Activated B cell treated with CpG ODN at 0.5 μM for 24 hours (primary cell): ENCODE measurements at regions of chr16 and their contacts with region 1.

Region 1: GRCh38 chr16:29745853-29746345 is at the start of gene C16orf54:
- DNase-seq: peak; percentile 80
- ATAC-seq: peak; percentile 86
- H3K4me3 Mint-ChIP-seq: peak within 1 kb of the TSS; percentile 94
- H3K27ac Mint-ChIP-seq: peak within 1 kb of the TSS; percentile 96
- H3K4me1 Mint-ChIP-seq: peaks cover 65% of the 10 kb centered on the region
- H3K27me3 Mint-ChIP-seq: no peaks in the 10 kb centered on the region
- CTCF ChIP-seq: no peak
- total RNA-seq, gene C16orf54: 20.4 and 22.5 TPM in 2 replicates

Region 2: GRCh38 chr16:29720699-29721098 is 25.2 kb before region 1 on chr16:
- CTCF ChIA-PET with region 1: no interaction called
- POLR2A ChIA-PET with region 1: interaction called, 12 read pairs
- intact Hi-C with region 1: no loop called
- DNase-seq: no peak
- ATAC-seq: no peak
- H3K4me3 Mint-ChIP-seq: no peak overlapping the region
- H3K27ac Mint-ChIP-seq: no peak overlapping the region
- H3K4me1 Mint-ChIP-seq: peaks cover 7% of the 10 kb centered on the region
- H3K27me3 Mint-ChIP-seq: no peaks in the 10 kb centered on the region
- CTCF ChIP-seq: no peak